AG04450 (cell line): ENCODE measurements at regions of chr19 and their contacts with region 1.

Region 1: DNA sequence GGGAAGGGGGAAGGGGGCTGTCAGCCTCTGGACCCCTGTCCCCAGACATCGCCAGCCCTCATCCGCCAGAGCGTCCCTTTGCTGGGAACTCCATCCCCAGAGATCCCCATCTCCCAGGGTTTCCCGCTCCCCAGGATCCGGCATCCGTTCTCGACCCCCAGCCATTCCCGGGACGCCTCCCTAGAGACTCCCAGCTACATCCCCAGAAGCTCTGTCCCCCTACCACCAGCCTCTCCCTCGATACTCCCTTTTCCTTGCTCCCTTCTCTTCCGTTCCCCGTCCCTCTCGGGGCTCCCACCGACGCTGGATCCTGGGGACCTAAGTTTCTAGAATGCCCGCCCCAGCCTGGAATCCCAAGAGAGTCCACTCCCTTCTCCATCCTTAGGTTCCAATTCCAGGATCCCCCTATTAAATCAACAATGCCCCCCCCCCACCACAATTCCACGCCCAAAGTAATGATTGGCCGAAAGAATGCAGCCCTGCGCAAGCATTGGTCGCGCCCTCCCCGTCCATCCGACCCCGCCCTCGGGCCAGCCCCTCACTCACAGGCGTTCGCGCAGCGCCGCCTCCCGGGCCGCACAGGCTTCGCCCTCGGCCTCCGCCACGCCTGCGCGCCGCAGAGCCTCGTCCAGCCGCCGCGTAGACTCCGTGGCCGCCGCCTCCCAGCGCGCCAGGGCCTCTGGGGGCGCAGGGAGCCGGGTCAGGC is 3.2 kb downstream of the CCDC194 start:
- DNase-seq: peak; percentile 72
- H3K4me3 ChIP-seq: peak overlapping the region; percentile 67
- H3K27ac ChIP-seq: no peak overlapping the region
- H3K27me3 ChIP-seq: peaks cover 14% of the 10 kb centered on the region
- CTCF ChIP-seq: peak; percentile 56

Region 2: GRCh38 chr19:16161848-16162247 is 1229.0 kb before region 1 on chr19:
- CTCF ChIA-PET with region 1: interaction called, 11 read pairs
- POLR2A ChIA-PET with region 1: no interaction called
- DNase-seq: peak; percentile 41
- H3K4me3 ChIP-seq: no peak overlapping the region
- H3K27ac ChIP-seq: peak overlapping the region; percentile 73
- H3K27me3 ChIP-seq: no peaks in the 10 kb centered on the region
- CTCF ChIP-seq: no peak

Region 3: DNA sequence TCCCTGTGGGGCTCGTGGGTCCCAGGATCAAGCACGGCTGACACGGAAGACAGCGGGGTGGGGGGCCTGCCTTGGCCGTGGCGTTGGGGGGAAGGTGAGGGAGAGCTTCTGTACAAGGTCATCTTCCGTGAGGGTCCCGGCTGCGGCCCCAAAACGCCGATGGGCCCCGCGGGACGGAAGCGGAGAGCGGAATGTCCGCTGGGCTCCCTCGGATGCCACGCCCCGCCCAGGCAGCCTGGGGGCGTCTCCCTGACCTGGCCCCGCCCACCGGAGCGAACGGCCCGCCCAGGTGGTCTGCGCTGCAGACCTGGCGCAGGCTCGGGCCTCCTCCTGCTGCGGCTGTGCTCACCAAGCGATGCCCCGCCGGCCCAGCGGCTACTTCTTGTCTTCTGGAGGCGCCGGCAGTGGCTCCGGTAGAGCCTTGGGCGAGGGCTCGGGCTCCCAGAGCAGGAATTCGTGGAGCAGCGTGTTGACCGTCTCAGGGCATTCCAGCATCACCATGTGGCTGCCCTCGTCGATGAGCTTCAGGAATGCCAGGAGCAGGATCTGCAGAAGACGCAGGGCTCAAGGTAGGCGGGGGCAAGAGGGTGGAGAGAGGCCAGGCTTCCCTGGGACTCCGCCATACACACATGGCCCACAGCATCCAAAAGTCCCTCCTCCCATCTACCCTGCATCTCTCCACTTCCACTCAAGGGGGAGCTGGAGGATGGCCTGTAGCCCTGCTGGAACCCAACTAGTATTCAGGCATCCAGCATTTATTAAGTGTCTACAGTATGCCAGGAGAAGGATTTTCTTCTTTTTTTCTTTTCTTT is 98.3 kb before region 1 on chr19:
- CTCF ChIA-PET with region 1: interaction called, 11 read pairs
- POLR2A ChIA-PET with region 1: no interaction called
- DNase-seq: peak; percentile 59
- H3K4me3 ChIP-seq: peak overlapping the region; percentile 63
- H3K27ac ChIP-seq: peak overlapping the region; percentile 81
- H3K27me3 ChIP-seq: no peaks in the 10 kb centered on the region
- CTCF ChIP-seq: peak; percentile 75

Region 4: DNA sequence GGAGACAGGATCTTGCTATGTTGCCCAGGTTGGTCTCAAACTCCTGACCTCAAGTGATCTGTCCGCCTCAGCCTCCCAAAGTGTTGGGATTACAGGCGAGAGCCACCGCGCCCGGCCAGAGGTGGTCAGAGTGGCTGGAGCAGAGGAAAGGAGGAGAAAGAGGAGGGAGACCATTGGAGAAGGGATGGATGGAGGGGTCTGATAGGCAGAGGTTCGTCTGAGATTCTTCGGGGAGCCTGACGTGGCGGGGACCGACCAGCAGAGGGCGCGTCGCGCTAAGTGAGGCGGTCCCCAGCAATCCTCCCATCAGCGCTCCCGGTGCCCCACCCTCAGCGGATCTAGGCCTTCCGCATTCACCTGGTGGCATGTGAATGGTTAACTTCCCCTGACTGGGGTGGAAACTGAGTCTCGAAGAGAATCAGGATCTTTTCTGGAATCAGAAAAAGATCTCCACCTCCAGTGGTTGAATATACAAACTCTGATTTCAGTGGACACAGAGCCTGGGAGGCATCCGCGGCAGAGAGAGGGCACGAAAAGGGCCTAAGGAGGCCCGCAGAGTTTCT is 44.6 kb before region 1 on chr19:
- CTCF ChIA-PET with region 1: interaction called, 87 read pairs
- POLR2A ChIA-PET with region 1: interaction called, 13 read pairs
- DNase-seq: no peak
- H3K4me3 ChIP-seq: no peak overlapping the region
- H3K27ac ChIP-seq: no peak overlapping the region
- H3K27me3 ChIP-seq: peaks cover 3% of the 10 kb centered on the region
- CTCF ChIP-seq: peak; percentile 89

Region 5: DNA sequence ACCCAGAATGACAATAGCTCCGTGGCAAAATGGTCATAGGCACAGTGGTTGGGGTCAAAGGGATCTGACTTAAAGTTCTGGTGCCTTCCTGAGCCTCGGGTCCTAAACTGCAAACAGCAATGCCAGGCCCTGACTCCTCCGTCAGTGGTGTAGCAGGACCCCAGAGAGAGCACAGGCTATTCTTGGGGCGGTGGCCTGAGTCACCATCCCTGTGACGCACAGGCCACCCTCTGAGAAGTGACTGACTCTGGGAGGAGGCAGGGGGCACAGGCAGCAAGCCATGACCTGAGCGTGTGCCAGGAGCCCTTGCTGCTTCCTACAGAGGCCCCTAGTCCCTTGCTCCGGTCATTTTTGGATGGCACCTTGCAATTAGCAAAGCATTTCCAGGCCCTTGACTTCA is 32.4 kb before region 1 on chr19:
- CTCF ChIA-PET with region 1: interaction called, 12 read pairs
- POLR2A ChIA-PET with region 1: no interaction called
- DNase-seq: no peak
- H3K4me3 ChIP-seq: no peak overlapping the region
- H3K27ac ChIP-seq: no peak overlapping the region
- H3K27me3 ChIP-seq: peaks cover 10% of the 10 kb centered on the region
- CTCF ChIP-seq: no peak

Region 6: DNA sequence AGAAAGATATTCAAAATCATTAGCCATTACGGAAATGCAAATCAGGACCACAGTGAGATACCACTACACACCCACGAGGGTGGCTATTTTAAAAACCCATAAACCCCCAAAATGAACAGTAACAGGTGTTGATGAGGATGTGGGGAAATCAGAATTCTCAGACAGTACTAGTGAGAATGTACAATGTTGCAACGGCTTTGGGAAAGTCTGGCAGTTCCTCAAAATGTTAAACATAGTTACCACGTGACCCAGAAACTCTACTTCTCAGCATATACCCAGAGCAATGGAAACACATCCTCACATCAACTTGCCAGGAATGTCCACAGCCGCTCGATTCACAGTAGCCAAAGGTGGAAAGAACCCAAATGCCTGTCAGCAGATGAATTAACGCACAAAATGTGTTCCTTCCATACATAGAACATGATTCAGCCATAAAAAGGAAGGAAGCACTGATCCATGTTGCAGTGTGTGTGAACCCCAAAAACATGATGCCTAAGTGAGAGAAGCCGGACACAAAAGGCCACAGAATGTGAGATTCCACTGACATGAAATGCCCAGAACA is 20.7 kb before region 1 on chr19:
- CTCF ChIA-PET with region 1: interaction called, 18 read pairs
- POLR2A ChIA-PET with region 1: interaction called, 3 read pairs
- DNase-seq: peak; percentile 32
- H3K4me3 ChIP-seq: no peak overlapping the region
- H3K27ac ChIP-seq: peak overlapping the region; percentile 21
- H3K27me3 ChIP-seq: peaks cover 3% of the 10 kb centered on the region
- CTCF ChIP-seq: no peak

Region 7: GRCh38 chr19:17411801-17412200 is 21.0 kb after region 1 on chr19:
- CTCF ChIA-PET with region 1: interaction called, 10 read pairs
- POLR2A ChIA-PET with region 1: no interaction called
- DNase-seq: no peak
- H3K4me3 ChIP-seq: no peak overlapping the region
- H3K27ac ChIP-seq: no peak overlapping the region
- H3K27me3 ChIP-seq: peaks cover 9% of the 10 kb centered on the region
- CTCF ChIP-seq: no peak